Right cardiac atrium (tissue), 5 donors: ENCODE measurements at regions of chr2 and their contacts with region 1.

Region 1: DNA sequence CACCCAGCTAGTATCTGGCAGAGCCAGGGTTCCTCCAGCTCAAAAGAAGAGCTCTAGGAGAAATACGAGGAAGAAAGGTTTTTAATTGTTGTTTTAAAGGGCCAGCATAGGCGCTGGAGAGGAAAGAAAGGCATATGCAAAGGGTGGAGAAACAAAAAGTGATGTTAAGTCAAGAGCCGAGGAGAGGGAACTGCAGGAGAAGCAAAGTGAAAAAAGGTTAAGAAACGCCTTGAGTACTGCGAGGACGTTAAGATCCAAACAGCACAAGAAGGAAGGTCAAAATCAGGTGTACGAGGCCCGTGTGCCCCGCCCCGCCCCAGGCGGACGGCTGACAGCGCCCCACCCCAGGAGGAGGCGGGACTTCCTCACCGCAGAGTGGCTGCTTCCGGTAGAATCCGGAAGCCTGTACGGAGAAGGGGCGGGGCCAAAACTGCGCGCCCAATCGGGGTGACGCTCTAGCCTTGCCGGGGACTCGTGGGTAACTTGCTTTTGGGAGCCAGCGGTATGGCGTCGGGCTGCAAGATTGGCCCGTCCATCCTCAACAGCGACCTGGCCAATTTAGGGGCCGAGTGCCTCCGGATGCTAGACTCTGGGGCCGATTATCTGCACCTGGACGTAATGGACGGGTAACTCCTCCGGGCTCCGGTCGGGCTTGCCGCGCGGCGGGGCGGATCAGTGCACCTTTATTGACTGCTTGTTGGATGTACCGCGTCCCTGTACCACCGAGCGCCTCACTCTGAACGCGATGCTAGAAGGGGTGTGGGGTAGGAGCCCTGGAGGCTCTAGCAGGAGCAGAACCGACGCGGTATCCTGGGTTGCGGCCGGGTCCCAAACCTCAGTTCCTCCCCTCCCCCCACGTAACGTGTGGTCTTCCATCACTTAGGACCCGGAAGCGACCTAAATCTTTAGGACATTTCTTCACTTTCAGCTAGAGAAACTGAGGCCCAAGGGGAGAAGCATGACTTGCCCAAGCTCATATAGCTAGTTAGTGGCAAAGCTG is at the start of gene RPE:
- DNase-seq: peak; percentile 98 to 99 (median 99)
- ATAC-seq: peak; percentile 100
- H3K4me3 ChIP-seq: peak within 1 kb of the TSS; percentile 81
- H3K27ac ChIP-seq: peak within 1 kb of the TSS; percentile 71
- H3K4me1 ChIP-seq: peaks cover 7% of the 10 kb centered on the region
- H3K27me3 ChIP-seq: no peaks in the 10 kb centered on the region
- total RNA-seq, gene RPE: 17.5 to 25.8 (median 23.2) TPM

Region 2: DNA sequence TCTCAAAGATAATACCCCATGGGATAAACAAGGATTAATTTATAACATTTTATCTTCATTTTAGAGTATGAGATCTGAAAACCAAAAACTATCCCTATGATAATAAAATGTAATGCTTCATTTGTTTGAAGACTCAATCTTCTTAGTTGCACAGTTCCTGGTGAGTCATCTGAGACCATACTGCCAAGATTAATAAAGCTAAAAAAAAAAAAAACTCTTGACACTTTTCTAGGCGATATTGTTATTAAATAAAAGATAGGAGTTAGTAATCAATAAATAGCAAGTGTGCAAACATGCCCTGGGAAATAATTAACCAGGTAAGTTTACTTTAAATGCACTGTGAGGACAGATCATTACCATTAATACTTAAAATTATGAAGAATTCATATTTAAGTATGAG is 83.8 kb after region 1 on chr2:
- intact Hi-C with region 1: no loop called
- DNase-seq: no peak
- ATAC-seq: no peak
- H3K4me3 ChIP-seq: no peak overlapping the region
- H3K27ac ChIP-seq: no peak overlapping the region
- H3K4me1 ChIP-seq: no peaks in the 10 kb centered on the region
- H3K27me3 ChIP-seq: no peaks in the 10 kb centered on the region

Region 3: GRCh38 chr2:210171309-210172203 is 169.1 kb after region 1 on chr2 and contains the start of gene KANSL1L:
- intact Hi-C with region 1: loop called in 1 of 4 experiments (anchors 10 kb)
- DNase-seq: peak; percentile 99 to 100 (median 100)
- ATAC-seq: peak; percentile 95 to 97
- H3K4me3 ChIP-seq: peak within 1 kb of the TSS; percentile 98
- H3K27ac ChIP-seq: peak within 1 kb of the TSS; percentile 100
- H3K4me1 ChIP-seq: no peaks in the 10 kb centered on the region
- H3K27me3 ChIP-seq: no peaks in the 10 kb centered on the region
- total RNA-seq, gene KANSL1L: 19.4 to 23.9 (median 22.2) TPM